ENCODE measurements at regions of chrX and their contacts with region 1.

Region 1: GRCh38 chrX:119145241-119145653 is 17.6 kb upstream of the KIAA1210 start:
- DNase-seq: no peak
- ATAC-seq: no peak
- H3K4me3 ChIP-seq: no peak overlapping the region
- H3K27ac ChIP-seq: no peak overlapping the region
- H3K4me1 ChIP-seq: no peaks in the 10 kb centered on the region
- H3K27me3 ChIP-seq: peaks cover 0 to 8% (median 0%) of the 10 kb centered on the region in 7 donors
- CTCF ChIP-seq: peak in 6 of 9 donors; percentile 39 to 56 (median 44)

Region 2: GRCh38 chrX:118948270-118948669 is 197.0 kb before region 1 on chrX:
- intact Hi-C with region 1: no loop called
- DNase-seq: no peak
- ATAC-seq: no peak
- H3K4me3 ChIP-seq: no peak overlapping the region
- H3K27ac ChIP-seq: no peak overlapping the region
- H3K4me1 ChIP-seq: no peaks in the 10 kb centered on the region
- H3K27me3 ChIP-seq: peaks cover 0 to 7% (median 0%) of the 10 kb centered on the region in 7 donors
- CTCF ChIP-seq: no peak

Region 3: DNA sequence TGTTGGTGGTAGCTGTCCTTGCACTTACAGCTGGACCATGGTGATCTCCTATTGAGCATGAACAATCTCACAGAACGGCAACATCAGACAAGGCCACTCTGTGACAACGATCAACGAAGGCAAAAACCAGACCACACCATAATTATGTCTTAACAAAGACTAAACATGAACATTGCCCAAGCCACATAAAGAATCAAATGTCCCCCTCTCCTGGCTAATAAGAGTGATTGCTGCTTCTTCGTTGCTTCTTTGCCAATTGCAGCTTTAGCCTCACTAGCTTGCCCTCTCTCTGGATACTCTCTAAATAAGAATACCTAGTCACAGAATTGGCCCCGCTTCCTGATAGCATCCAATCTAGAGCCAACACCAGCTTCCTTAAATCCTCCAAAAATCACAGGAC is 49.4 kb after region 1 on chrX:
- intact Hi-C with region 1: loop called in 1 of 10 experiments (anchors 10 kb)
- DNase-seq: no peak
- ATAC-seq: no peak
- H3K4me3 ChIP-seq: no peak overlapping the region
- H3K27ac ChIP-seq: no peak overlapping the region
- H3K4me1 ChIP-seq: no peaks in the 10 kb centered on the region
- H3K27me3 ChIP-seq: no peaks in the 10 kb centered on the region
- CTCF ChIP-seq: peak in 6 of 9 donors; percentile 19 to 41 (median 32)

Region 4: DNA sequence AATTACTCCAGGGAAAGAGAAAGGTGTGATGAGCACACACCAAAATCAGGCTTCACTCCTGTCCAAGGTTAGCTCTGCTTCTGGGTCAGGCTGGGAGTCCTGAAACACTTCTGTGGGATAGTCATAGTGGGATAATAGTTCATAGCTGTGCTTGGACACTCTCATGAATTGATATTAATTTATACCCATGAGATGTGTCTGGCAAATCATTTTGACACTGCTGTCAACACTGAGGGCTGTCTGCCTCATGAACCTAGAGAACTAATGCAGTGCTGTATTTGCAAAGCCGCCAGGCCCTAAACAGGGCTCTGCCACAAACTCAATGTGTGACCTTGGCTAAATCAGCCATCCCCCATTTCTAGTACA is 66.4 kb after region 1 on chrX:
- intact Hi-C with region 1: loop called in 3 of 10 experiments (anchors 5 to 10 kb)
- DNase-seq: peak in 1 of 2 donors; percentile 7
- ATAC-seq: peak; percentile 75 to 96 (median 89)
- H3K4me3 ChIP-seq: no peak overlapping the region
- H3K27ac ChIP-seq: peak overlapping the region in 7 of 10 donors; percentile 22 to 71 (median 58)
- H3K4me1 ChIP-seq: no peaks in the 10 kb centered on the region
- H3K27me3 ChIP-seq: peaks cover 0 to 18% (median 0%) of the 10 kb centered on the region in 7 donors
- CTCF ChIP-seq: no peak

Region 5: DNA sequence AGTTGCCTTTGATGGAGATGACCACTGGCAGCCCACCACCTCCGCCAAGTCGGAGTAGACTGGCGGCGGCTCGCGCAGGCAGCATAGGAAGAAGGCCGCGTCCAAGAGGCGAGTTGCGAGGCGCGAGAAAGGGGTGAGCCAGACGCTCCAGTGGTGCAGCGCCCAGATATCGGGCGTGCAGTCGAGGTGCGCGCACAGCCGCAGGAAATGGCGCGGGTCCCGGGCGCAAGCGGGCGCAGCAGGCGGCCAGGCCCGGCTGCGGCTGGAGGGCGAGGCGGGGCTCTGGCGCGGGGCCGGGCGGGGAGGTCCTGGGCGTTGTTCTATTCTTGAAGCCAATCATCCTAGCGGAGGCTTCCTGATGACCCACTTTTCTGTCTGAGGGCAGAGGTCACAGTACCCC is 77.7 kb after region 1 on chrX:
- intact Hi-C with region 1: loop called in 5 of 10 experiments (anchors 2 to 10 kb)
- DNase-seq: no peak
- ATAC-seq: no peak
- H3K4me3 ChIP-seq: no peak overlapping the region
- H3K27ac ChIP-seq: no peak overlapping the region
- H3K4me1 ChIP-seq: no peaks in the 10 kb centered on the region
- H3K27me3 ChIP-seq: peaks cover 0 to 45% (median 0%) of the 10 kb centered on the region in 7 donors
- CTCF ChIP-seq: no peak

Region 6: DNA sequence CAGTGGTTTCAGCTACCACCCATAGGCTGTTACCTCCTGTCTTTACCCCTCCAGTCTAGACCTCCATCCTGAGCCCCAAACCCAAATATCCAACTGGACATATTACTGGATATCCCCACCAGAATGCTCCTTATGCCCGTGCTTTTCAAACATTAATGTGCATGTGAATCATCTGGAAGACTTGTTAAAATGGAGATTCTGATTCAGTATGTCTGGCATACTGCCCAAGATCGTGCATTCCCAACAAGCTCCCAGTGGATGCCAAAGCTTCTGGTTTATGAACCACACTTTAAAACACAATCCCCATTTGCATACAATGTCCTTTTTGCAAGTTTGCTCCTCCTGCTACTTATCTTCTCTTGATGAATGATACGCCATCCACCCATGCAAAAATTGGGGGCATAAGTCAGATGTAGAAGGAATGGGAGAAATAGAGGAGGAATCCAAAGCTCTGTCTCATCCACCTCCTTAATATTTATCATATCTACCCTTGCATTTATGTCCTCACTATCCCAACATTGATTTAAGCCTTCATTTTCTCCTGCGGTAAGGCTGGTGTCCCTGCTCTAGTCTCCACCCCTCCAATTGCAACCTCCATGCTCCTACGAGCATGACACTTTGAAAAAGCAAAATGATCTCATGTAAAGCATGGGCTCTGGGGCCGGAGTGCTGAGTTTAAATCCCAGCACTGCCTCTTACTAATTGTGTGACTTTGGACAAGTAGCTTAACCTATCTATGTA is 83.4 kb after region 1 on chrX:
- intact Hi-C with region 1: loop called in 1 of 10 experiments (anchors 10 kb)
- DNase-seq: no peak
- ATAC-seq: no peak
- H3K4me3 ChIP-seq: no peak overlapping the region
- H3K27ac ChIP-seq: no peak overlapping the region
- H3K4me1 ChIP-seq: no peaks in the 10 kb centered on the region
- H3K27me3 ChIP-seq: peaks cover 0 to 43% (median 0%) of the 10 kb centered on the region in 7 donors
- CTCF ChIP-seq: no peak

Region 7: DNA sequence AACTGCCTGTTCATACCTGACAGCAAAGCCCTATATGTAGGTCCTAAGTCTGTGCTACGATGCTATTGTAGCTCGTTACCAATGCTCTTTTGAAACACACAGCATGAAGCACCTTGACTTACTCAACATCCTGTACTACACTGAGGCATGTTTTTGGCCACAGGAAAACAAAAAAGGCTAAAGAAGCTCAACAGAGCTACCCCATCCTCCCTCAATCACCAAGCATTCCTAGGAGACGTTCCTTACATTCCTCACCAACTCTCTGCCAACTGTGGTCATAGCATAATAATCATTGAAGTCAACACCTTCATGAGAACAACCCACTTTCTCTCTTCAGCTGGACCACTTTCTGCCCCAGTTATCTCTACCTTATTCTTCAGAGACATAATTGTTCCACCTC is 180.2 kb after region 1 on chrX:
- intact Hi-C with region 1: no loop called
- DNase-seq: no peak
- ATAC-seq: no peak
- H3K4me3 ChIP-seq: no peak overlapping the region
- H3K27ac ChIP-seq: no peak overlapping the region
- H3K4me1 ChIP-seq: no peaks in the 10 kb centered on the region
- H3K27me3 ChIP-seq: no peaks in the 10 kb centered on the region
- CTCF ChIP-seq: no peak